A549 (cell line): ENCODE measurements at regions of chr6 and their contacts with region 1.

Region 1: GRCh38 chr6:63527658-63528514 is 44.4 kb upstream of the LOC128125822 start:
- DNase-seq: peak; percentile 79 to 97
- ATAC-seq: peak; percentile 92 to 99
- H3K4me3 ChIP-seq: peak overlapping the region; percentile 32
- H3K27ac ChIP-seq: peak overlapping the region; percentile 97 to 99
- H3K4me1 ChIP-seq: peaks cover 65% of the 10 kb centered on the region
- CTCF ChIP-seq: no peak
- EP300 ChIP-seq: peak; percentile 97 to 98; a peak in 4 of 5 replicates
- POLR2A ChIP-seq: no peak
- RAD21 ChIP-seq: peak; percentile 6 to 65; a peak in 3 of 5 replicates

Region 2: DNA sequence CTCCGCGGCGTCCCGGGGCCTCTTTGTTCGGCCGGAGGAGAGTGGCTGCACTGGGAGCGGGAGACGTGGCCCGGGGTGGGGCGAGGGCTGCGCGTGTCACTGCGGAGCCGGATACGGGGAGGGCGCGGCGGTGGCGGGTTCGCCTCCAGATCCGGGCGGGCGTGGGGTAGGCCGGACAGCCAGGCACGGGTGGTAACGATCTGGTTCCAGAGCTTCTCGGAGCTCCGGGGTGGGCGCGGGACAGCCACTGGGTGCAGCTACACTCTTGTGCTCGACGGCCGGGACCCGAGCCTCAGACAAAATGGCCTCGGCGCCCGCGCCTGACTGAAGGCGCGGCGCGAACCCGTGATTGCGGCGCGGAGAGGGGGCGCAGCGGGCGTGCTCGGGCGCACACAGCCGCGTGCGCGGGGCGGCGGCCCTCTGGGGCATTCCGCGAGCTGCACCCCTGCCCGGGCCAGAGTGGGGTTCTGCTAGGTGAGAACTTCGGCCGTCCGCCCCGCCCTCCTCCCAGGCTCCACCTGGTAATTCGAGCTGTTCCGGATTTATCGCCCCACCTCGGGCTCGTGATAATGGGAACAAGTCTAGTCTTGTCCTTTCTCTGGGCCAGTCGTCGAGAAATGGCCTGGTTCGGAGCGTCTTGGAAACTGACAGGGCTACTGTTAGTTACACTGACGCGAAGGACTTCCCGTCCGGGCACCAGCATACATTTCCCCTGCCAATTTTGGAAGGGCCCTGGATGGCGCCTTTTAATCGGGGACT is 45.4 kb after region 1 on chr6:
- CTCF ChIA-PET with region 1: interaction called, 13 read pairs
- POLR2A ChIA-PET with region 1: interaction called, 13 read pairs
- DNase-seq: peak in 1 of 2 experiments; percentile 79
- ATAC-seq: peak; percentile 36 to 39
- H3K4me3 ChIP-seq: peak overlapping the region; percentile 54
- H3K27ac ChIP-seq: peak overlapping the region; percentile 97 to 100
- H3K4me1 ChIP-seq: peaks cover 43% of the 10 kb centered on the region
- CTCF ChIP-seq: no peak
- EP300 ChIP-seq: no peak
- POLR2A ChIP-seq: peak; percentile 42
- RAD21 ChIP-seq: 0 out of 5 replicates have a peak, but pooled peaks of 1 of the 2 experiments have one; percentile 1

Region 3: GRCh38 chr6:64062960-64063683 is 535.2 kb after region 1 on chr6:
- CTCF ChIA-PET with region 1: no interaction called
- POLR2A ChIA-PET with region 1: no interaction called
- DNase-seq: peak in 1 of 2 experiments; percentile 10
- ATAC-seq: peak in 1 of 2 experiments; percentile 47; a peak in 1 of 6 replicates
- H3K4me3 ChIP-seq: no peak overlapping the region
- H3K27ac ChIP-seq: no peak overlapping the region
- H3K4me1 ChIP-seq: no peaks in the 10 kb centered on the region
- CTCF ChIP-seq: no peak
- EP300 ChIP-seq: no peak
- POLR2A ChIP-seq: no peak
- RAD21 ChIP-seq: no peak